ENCODE measurements at regions of chr13 and their contacts with region 1.

Region 1: DNA sequence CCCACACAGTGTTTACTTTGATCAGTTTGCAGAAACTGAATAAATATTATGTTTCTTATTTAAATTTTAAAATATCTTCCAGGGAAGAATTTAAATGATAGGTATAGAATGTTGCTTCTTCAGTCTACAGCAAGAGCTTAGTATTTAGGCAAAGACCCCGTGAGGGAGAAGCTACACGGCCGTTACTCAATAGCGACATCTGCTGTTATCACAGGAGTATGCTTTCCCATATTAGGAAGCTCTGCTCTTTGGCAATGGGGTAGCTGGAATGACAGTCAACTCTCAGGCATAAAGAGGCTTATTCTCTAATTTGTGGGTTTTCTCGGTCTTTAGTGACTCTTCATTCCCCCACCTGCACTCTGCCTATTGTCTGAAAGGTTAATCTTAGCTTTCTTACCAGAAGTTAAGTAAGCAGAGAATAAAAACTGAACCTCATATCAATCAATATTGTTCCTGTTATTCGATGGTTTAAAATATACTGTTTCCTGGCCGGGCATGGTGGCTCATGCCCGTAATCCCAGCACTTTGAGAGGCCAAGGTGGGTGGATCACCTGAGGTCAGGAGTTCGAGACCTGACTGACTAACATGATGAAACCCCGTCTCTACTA is 13.2 kb upstream of the LHFPL6 start:
- DNase-seq: peak; percentile 83
- H3K4me3 ChIP-seq: no peak overlapping the region
- H3K27ac ChIP-seq: no peak overlapping the region
- H3K4me1 ChIP-seq: no peaks in the 10 kb centered on the region
- CTCF ChIP-seq: peak; percentile 95

Region 2: DNA sequence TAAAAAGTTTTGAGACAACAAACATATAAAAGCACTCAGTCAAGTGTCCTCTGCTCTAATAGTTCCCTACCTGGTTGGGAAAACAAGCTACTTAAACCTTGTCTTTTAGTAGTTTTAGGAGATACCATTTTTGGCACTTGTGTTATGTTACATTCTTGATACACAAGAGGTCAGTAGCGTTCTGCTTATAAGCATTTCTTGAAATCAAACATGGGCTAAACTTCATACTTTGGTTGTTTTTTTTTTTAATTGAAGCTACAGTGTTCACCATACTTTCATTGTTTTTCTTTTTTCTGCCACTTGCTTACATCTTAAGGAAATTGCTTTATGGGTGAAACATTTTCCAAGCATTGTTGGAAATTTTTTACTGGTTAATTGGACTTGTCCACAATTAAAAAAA is 565.0 kb before region 1 on chr13:
- CTCF ChIA-PET with region 1: no interaction called
- POLR2A ChIA-PET with region 1: no interaction called
- intact Hi-C with region 1: loop called (anchors 2 kb)
- DNase-seq: peak; percentile 60
- H3K4me3 ChIP-seq: no peak overlapping the region
- H3K27ac ChIP-seq: no peak overlapping the region
- H3K4me1 ChIP-seq: no peaks in the 10 kb centered on the region
- CTCF ChIP-seq: peak; percentile 75

Region 3: DNA sequence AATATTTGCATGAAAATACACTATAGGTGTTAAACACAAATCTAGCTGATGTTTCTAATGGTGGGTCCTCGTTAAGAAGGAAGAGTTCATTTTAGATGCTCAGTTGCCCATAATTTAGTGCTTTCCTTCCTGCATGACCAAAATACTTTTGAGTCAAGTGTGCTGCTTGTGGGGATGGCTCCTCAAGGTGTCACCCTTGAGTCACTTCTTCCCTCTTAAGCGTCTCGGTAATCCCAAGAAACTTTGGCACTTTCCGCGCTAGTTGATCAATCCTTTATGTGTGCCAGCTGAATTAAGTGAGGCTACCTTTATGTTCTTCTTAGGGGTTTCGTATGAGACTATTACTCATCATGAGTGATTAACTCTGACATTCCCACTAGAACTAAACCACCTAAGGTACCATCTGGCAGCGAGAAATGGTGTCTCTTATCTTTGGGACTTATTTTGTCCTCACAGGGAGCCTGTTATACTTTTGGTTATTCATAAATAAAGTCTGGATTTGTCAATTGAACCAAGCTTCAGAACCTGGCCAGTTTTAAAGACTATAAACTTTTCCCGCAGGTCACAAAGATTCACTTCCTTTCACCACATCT is 471.2 kb before region 1 on chr13:
- CTCF ChIA-PET with region 1: no interaction called
- POLR2A ChIA-PET with region 1: no interaction called
- intact Hi-C with region 1: loop called (anchors 2 kb)
- DNase-seq: peak; percentile 32
- H3K4me3 ChIP-seq: no peak overlapping the region
- H3K27ac ChIP-seq: no peak overlapping the region
- H3K4me1 ChIP-seq: no peaks in the 10 kb centered on the region
- CTCF ChIP-seq: peak; percentile 78

Region 4: GRCh38 chr13:39273953-39274738 is 342.0 kb before region 1 on chr13:
- CTCF ChIA-PET with region 1: interaction called, 4 read pairs
- POLR2A ChIA-PET with region 1: interaction called, 3 read pairs
- intact Hi-C with region 1: loop called (anchors 2 kb)
- DNase-seq: peak; percentile 47
- H3K4me3 ChIP-seq: no peak overlapping the region
- H3K27ac ChIP-seq: no peak overlapping the region
- H3K4me1 ChIP-seq: peaks cover 6% of the 10 kb centered on the region
- CTCF ChIP-seq: peak; percentile 69

Region 5: DNA sequence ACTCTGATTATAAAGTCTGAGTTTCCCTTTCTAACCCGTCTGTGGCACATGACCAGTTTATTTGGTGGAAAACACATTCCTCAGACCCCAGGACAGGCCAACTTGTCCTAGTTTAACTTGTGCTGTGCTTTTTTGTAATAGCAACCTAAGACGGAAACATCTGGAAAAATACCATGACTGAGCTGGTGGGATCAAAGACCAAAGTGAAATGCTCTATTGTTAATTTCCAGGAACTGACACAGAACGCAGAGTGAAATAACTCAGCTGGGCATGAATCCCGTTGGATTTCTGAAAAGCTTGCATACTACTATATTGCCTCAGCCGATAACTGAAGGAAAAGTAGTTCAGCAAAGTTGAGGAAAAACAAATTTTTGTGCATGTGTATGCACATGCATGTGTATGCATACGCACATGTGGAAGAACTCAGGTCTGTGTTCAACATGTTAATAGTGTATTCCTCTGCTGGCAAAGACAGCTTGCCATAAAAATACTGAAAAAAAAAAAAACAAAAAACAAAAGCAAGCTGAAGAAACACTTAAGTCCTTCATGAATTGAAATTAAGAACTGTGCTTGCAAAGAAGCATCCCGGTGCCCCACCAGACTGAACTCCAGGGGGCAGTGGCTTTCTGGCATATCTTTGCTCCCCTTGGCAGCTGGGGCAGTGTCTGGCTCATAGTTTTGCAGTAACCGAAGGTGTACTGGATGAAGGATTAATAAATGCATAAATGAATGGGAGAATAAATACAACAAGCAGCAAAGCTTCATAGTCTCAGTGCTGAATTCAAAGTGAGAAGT is 201.0 kb before region 1 on chr13:
- CTCF ChIA-PET with region 1: interaction called, 4 read pairs
- POLR2A ChIA-PET with region 1: interaction called, 11 read pairs
- intact Hi-C with region 1: loop called (anchors 1 kb)
- DNase-seq: peak; percentile 64
- H3K4me3 ChIP-seq: no peak overlapping the region
- H3K27ac ChIP-seq: no peak overlapping the region
- H3K4me1 ChIP-seq: peaks cover 14% of the 10 kb centered on the region
- CTCF ChIP-seq: peak; percentile 85

Region 6: DNA sequence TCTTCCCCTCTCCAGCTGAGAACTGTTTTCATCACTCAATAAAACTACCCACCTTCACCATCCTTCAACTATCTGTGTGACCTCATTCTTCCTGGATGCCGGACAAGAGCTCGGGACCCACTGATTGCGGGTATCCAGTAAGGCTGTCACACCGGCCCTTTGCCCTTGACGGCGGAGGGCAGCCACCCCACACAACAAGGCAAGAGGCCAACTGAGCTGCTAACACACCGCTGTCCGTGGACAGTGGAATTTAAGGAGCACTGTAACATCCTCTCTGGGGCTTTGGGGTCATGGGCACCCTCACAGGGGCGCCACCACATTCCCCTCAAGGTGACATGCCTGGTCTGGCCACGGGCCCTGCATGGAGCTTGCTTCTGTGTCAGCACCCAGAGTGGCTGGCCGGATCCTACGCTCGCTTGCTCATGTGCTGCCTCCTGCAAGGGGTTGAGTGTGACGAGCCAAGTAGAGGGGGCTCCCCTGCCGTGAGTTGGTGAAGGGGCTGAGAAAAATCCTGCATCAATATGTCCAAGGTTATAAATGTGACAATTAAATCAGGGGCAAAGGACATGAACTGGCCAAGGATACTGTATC is 44.6 kb before region 1 on chr13:
- CTCF ChIA-PET with region 1: no interaction called
- POLR2A ChIA-PET with region 1: interaction called, 11 read pairs
- intact Hi-C with region 1: no loop called
- DNase-seq: no peak
- H3K4me3 ChIP-seq: no peak overlapping the region
- H3K27ac ChIP-seq: no peak overlapping the region
- H3K4me1 ChIP-seq: peaks cover 17% of the 10 kb centered on the region
- CTCF ChIP-seq: no peak

Region 7: GRCh38 chr13:40120288-40120687 is 504.1 kb after region 1 on chr13:
- CTCF ChIA-PET with region 1: no interaction called
- POLR2A ChIA-PET with region 1: no interaction called
- intact Hi-C with region 1: no loop called
- DNase-seq: no peak
- H3K4me3 ChIP-seq: no peak overlapping the region
- H3K27ac ChIP-seq: no peak overlapping the region
- H3K4me1 ChIP-seq: peaks cover 30% of the 10 kb centered on the region
- CTCF ChIP-seq: no peak

Measured in OCI-LY7 (cell line).